Heart right ventricle (tissue), 16 donors: ENCODE measurements at regions of chr1 and their contacts with region 1.

Region 1: DNA sequence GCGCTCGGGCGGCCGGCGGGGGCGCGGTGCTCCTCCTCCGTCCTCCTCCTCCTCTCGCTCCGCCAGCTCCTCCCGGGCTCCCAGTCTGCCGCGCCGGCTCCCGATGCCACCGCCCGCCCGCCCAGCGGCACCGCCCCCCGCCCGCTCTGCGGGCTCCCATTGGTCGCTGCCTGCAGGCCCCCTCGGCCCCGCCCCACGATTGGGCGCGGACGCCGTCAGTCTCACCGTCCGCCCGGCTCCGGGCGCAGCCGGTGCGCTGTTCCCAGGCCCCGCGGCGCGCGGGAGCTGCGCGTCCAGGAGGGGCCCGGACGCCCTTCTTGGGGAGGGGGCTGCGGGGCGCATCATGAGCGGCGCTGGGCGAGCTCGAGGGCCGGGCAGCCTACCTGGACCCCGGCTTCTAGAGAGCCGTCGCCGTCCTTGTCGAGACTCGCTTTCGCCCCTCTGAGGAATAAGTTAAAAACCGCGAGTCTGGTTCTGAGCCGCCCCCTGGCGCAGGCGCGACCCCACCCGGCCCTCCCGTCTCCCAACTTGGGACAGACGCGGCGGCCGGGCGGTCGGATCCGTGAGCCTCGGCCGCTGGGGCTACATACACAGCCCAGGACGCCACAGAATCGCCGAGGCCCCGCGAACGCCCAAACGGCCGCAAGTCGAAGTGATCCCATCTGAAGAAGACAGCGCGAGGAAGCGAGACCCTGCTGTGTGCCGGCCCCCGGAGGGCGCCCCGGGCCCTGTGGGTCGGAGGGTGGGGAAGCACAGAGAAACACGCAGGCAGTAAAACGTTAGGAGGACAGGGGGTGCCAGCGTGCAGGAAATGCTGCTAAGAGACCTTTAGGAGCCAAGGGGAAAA is at the start of gene SIPA1L2:
- DNase-seq: peak; percentile 94 to 97
- ATAC-seq: peak; percentile 95 to 98 (median 96)
- H3K4me3 ChIP-seq: peak within 1 kb of the TSS; percentile 57 to 98 (median 86)
- H3K27ac ChIP-seq: peak within 1 kb of the TSS; percentile 63 to 96 (median 94)
- H3K4me1 ChIP-seq: peaks cover 4 to 52% (median 33%) of the 10 kb centered on the region in 9 donors
- H3K27me3 ChIP-seq: no peaks in the 10 kb centered on the region
- CTCF ChIP-seq: peak in 8 of 9 donors; percentile 17 to 71 (median 54)
- total RNA-seq, gene SIPA1L2: 64.9 to 141 (median 101) TPM

Region 2: GRCh38 chr1:231866392-231867331 is 763.6 kb before region 1 on chr1:
- intact Hi-C with region 1: loop called in 8 of 10 experiments (anchors 1 to 10 kb)
- DNase-seq: peak; percentile 39 to 64
- ATAC-seq: peak in 6 of 8 donors; percentile 28 to 69 (median 45)
- H3K4me3 ChIP-seq: no peak overlapping the region
- H3K27ac ChIP-seq: no peak overlapping the region
- H3K4me1 ChIP-seq: peaks cover 14 to 56% (median 41%) of the 10 kb centered on the region in 9 donors
- H3K27me3 ChIP-seq: no peaks in the 10 kb centered on the region
- CTCF ChIP-seq: peak; percentile 81 to 95 (median 90)

Region 3: DNA sequence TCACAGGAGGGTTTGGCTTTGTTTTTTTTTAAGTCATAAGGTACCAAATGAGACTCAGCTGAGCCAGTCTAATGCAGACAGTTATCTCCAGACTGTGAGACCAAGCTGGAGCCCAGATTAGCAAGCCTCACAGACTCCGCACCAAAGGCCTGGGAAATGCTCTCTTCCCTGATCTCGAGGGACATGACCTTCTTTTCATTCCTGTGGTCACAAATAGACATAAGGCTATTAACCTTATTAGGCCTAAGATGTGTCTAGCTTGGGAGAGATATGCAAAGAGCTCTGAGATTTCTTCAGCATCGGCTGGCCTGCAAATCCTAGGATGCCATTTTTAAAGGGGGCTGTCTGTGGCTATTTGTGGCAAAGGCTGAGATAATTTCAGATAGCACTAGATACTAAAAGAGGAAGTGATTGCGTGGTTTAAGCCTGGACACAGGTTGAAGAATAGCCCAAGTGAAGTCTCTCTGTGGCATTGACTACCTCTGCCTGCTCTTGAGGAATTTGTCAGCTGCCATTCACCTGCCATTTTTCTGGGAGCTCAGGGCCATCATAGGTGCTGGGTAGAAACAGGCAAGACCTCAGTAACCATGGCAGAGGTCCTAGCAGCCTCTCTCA is 301.7 kb before region 1 on chr1:
- intact Hi-C with region 1: loop called in 1 of 10 experiments (anchors 10 kb)
- DNase-seq: peak in 1 of 2 donors; percentile 38
- ATAC-seq: peak; percentile 53 to 87 (median 68)
- H3K4me3 ChIP-seq: no peak overlapping the region
- H3K27ac ChIP-seq: peak overlapping the region in 6 of 10 donors; percentile 6 to 56 (median 33)
- H3K4me1 ChIP-seq: peaks cover 4 to 30% (median 13%) of the 10 kb centered on the region in 9 donors
- H3K27me3 ChIP-seq: no peaks in the 10 kb centered on the region
- CTCF ChIP-seq: no peak

Region 4: DNA sequence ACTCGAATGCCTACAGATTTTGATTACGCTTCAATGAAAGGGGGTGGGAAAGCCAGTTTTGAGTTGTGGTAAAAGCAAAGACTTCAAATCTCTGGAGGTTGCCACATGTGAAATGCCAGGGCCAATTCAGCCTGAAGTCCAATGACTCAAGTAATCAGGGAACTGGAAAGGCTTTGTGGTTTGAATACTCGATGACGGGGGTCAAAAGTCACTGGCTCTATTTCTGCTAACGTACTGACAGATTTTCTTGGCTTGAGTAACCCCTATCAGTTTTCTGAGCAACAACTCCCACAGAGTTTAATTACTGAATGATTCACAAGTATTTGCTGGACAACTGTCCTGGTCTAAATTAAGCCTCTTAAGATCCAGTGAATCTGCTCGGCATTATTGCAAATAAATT is 152.5 kb before region 1 on chr1:
- intact Hi-C with region 1: loop called in 6 of 10 experiments (anchors 10 kb)
- DNase-seq: peak in 1 of 2 donors; percentile 17
- ATAC-seq: peak; percentile 20 to 79 (median 51)
- H3K4me3 ChIP-seq: no peak overlapping the region
- H3K27ac ChIP-seq: peak overlapping the region in 6 of 10 donors; percentile 15 to 48 (median 24)
- H3K4me1 ChIP-seq: peaks cover 0 to 51% (median 32%) of the 10 kb centered on the region in 9 donors
- H3K27me3 ChIP-seq: no peaks in the 10 kb centered on the region
- CTCF ChIP-seq: no peak

Region 5: DNA sequence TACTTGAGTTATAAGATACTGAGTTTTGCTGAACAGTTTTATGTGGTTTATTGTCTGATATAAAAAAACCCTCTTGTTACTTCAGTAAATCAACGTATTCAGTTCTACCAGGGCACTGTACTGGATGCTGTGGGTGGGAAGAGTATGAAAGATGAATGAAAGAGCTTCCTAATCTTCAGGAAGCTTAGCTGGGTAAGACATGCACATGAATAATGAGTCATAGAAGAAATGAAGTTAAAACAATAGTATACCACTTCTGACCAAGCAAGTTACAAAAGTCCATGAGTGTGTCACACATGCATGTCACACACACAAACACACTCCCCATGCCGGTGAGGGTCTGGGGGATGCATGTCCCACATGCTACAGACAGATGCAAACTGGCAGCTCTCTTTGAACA is 106.2 kb before region 1 on chr1:
- intact Hi-C with region 1: no loop called
- DNase-seq: no peak
- ATAC-seq: no peak
- H3K4me3 ChIP-seq: no peak overlapping the region
- H3K27ac ChIP-seq: no peak overlapping the region
- H3K4me1 ChIP-seq: peaks cover 3 to 67% (median 32%) of the 10 kb centered on the region in 9 donors
- H3K27me3 ChIP-seq: no peaks in the 10 kb centered on the region
- CTCF ChIP-seq: no peak

Region 6: DNA sequence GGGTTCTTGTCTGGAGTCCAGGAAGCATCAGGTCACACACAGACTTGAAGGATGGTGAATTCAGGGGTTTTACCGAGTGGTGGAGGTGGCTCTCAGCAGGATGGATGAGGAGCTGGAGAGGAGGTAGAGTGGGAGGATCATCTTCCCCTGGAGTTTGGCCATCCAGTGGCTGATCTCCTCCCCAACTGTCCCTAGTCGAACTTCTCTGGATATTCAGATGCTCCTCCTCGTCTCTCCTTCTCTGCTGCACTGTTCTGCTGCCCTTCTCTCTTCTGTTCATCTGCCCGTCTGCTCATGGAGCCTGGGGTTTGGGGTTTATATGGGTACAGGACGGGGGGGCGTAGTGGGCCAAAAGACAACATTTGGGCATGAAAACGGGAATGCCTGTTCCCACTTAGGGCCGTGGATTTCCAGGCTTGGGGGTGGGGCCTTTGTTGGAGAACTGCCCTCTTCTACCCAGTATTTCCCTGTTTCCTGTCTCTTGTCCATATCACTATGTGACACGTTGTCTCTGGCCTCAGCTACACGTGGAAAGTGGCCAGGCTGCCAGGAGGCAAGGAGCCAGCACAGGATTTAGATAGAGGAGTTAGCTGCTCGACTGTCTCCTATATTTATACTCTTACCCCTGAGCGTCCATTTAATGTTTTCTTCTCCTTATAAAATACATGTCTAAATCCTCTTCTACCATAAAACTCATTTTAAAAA is 77.1 kb before region 1 on chr1:
- intact Hi-C with region 1: loop called in 1 of 10 experiments (anchors 10 kb)
- DNase-seq: peak; percentile 85 to 89
- ATAC-seq: peak; percentile 73 to 93 (median 90)
- H3K4me3 ChIP-seq: peak overlapping the region in 3 of 10 donors; percentile 2 to 13 (median 8)
- H3K27ac ChIP-seq: peak overlapping the region in 9 of 10 donors; percentile 7 to 87 (median 77)
- H3K4me1 ChIP-seq: peaks cover 4 to 95% (median 77%) of the 10 kb centered on the region in 9 donors
- H3K27me3 ChIP-seq: no peaks in the 10 kb centered on the region
- CTCF ChIP-seq: no peak

Region 7: GRCh38 chr1:232793944-232794343 is 163.7 kb after region 1 on chr1:
- intact Hi-C with region 1: loop called in 1 of 10 experiments (anchors 10 kb)
- DNase-seq: no peak
- ATAC-seq: peak in 1 of 8 donors; percentile 47
- H3K4me3 ChIP-seq: no peak overlapping the region
- H3K27ac ChIP-seq: no peak overlapping the region
- H3K4me1 ChIP-seq: peaks cover 0 to 30% (median 11%) of the 10 kb centered on the region in 9 donors
- H3K27me3 ChIP-seq: no peaks in the 10 kb centered on the region
- CTCF ChIP-seq: peak in 2 of 9 donors; percentile 19 to 30

Region 8: DNA sequence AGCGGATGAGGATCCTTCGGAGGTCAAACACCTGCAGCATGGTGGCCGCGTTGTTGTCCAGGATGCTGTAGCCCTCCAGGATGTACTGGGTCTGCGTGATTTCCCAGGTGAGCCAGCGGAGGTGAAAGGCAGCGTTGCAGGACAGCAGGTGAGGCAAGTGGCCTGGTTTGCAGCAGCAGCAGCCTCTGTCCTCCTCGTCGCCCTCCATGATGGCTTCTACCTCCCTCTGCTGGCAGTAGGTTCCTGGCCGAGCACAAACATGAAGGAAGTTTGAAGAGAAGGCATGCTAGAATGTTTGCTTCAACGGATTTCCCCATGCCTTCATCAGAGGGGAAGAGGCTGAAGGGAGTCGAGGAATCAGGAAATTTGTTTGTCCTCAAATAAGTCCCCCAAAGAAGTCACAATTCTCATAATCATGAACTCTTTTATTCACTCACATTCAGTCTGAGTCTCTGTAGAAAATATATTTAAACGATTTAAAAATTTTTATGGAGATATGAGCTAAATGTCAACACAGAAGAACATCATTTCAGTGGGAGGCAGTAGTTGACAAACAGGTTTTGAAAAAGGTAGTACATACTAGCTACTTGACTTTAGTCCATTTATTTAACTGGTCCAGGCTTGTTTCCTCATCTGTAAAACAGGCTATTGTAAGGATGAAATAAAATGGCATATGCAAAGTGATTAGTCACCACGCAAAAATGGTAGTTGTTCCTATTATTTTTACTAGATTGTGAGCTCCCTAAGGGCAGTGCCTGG is 395.1 kb after region 1 on chr1:
- intact Hi-C with region 1: loop called (anchors 1 to 10 kb)
- DNase-seq: peak; percentile 24 to 41
- ATAC-seq: peak in 6 of 8 donors; percentile 38 to 78 (median 59)
- H3K4me3 ChIP-seq: no peak overlapping the region
- H3K27ac ChIP-seq: no peak overlapping the region
- H3K4me1 ChIP-seq: peaks cover 0 to 15% (median 6%) of the 10 kb centered on the region in 9 donors
- H3K27me3 ChIP-seq: no peaks in the 10 kb centered on the region
- CTCF ChIP-seq: peak; percentile 21 to 73 (median 62)